Activated B cell treated with CpG ODN at 0.5 μM for 24 hours (primary cell): ENCODE measurements at regions of chr5 and their contacts with region 1.

Region 1: GRCh38 chr5:139273572-139274289 is 19.8 kb upstream of the MATR3 start:
- DNase-seq: peak; percentile 93
- ATAC-seq: peak; percentile 96
- H3K4me3 Mint-ChIP-seq: peak overlapping the region; percentile 90
- H3K27ac Mint-ChIP-seq: peak overlapping the region; percentile 91
- H3K4me1 Mint-ChIP-seq: peaks cover 52% of the 10 kb centered on the region
- H3K27me3 Mint-ChIP-seq: no peaks in the 10 kb centered on the region
- CTCF ChIP-seq: no peak

Region 2: DNA sequence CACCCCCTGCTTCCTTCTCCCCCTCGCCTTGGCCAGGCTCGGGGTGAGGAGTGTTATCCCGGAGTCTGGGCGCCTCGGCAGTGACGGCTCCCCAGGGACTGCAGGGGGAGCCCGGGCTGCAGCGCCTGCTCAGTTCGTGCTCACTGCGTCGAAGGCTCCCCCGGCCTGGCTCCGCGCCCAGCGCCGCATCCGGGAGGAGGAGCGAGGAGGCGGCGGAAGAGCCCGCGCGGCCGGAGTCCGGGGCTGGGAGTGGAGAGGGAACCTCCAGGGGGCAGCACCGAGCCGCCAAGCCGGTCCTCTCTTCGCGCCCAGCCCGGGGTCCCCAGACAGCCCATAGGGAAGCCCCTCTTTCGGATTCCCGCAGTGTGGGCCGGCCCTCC is 809.7 kb before region 1 on chr5:
- CTCF ChIA-PET with region 1: no interaction called
- POLR2A ChIA-PET with region 1: interaction called, 7 read pairs
- intact Hi-C with region 1: loop called (anchors 10 kb)
- DNase-seq: peak; percentile 92
- ATAC-seq: peak; percentile 56
- H3K4me3 Mint-ChIP-seq: peak overlapping the region; percentile 89
- H3K27ac Mint-ChIP-seq: peak overlapping the region; percentile 92
- H3K4me1 Mint-ChIP-seq: peaks cover 49% of the 10 kb centered on the region
- H3K27me3 Mint-ChIP-seq: no peaks in the 10 kb centered on the region
- CTCF ChIP-seq: peak; percentile 87

Region 3: DNA sequence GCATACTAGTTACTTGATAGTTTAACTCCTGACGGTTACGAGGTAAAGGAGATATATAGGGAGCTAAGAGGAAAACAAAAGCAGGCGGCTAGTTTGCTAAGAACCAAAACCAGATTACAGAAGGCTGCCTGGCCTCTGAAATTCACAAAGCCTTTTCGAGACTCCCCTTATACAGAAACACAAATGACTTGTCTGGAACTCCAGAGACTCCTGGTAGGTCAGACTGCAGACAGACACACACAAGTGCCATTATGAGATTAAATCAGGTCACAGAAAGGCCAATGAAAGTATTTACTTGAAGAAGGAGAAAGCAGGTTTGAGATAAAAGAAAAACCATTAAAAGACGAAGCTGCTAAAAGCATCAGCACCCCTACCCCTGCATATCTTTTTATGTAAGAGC is 256.1 kb before region 1 on chr5:
- CTCF ChIA-PET with region 1: no interaction called
- POLR2A ChIA-PET with region 1: interaction called, 13 read pairs
- intact Hi-C with region 1: no loop called
- DNase-seq: no peak
- ATAC-seq: no peak
- H3K4me3 Mint-ChIP-seq: no peak overlapping the region
- H3K27ac Mint-ChIP-seq: no peak overlapping the region
- H3K4me1 Mint-ChIP-seq: no peaks in the 10 kb centered on the region
- H3K27me3 Mint-ChIP-seq: no peaks in the 10 kb centered on the region
- CTCF ChIP-seq: no peak

Region 4: DNA sequence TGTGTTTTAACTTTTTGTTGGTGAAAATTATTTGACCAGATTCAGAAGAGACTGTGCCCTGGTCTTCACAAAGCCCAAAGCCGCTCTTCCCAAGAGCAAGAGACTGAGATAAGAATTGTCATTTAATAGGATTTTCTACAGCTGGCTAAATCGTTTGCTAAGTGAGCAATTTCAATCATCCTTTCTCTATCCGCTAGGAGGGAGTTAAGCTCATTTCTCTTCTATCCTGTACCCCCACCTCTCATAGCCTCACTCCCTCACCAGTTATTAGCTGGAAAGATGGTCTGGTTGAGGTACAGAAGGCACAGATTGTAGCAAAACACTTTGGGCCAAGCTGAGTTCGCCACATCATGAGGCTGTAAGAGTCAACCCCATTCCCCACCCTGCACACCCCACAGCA is 32.6 kb before region 1 on chr5:
- CTCF ChIA-PET with region 1: no interaction called
- POLR2A ChIA-PET with region 1: no interaction called
- intact Hi-C with region 1: no loop called
- DNase-seq: no peak
- ATAC-seq: no peak
- H3K4me3 Mint-ChIP-seq: no peak overlapping the region
- H3K27ac Mint-ChIP-seq: no peak overlapping the region
- H3K4me1 Mint-ChIP-seq: no peaks in the 10 kb centered on the region
- H3K27me3 Mint-ChIP-seq: peaks cover 11% of the 10 kb centered on the region
- CTCF ChIP-seq: no peak

Region 5: GRCh38 chr5:139251281-139251687 is 22.4 kb before region 1 on chr5:
- CTCF ChIA-PET with region 1: interaction called, 5 read pairs
- POLR2A ChIA-PET with region 1: no interaction called
- intact Hi-C with region 1: loop called (anchors 1 kb)
- DNase-seq: no peak
- ATAC-seq: peak; percentile 50
- H3K4me3 Mint-ChIP-seq: no peak overlapping the region
- H3K27ac Mint-ChIP-seq: no peak overlapping the region
- H3K4me1 Mint-ChIP-seq: peaks cover 5% of the 10 kb centered on the region
- H3K27me3 Mint-ChIP-seq: no peaks in the 10 kb centered on the region
- CTCF ChIP-seq: no peak

Region 6: DNA sequence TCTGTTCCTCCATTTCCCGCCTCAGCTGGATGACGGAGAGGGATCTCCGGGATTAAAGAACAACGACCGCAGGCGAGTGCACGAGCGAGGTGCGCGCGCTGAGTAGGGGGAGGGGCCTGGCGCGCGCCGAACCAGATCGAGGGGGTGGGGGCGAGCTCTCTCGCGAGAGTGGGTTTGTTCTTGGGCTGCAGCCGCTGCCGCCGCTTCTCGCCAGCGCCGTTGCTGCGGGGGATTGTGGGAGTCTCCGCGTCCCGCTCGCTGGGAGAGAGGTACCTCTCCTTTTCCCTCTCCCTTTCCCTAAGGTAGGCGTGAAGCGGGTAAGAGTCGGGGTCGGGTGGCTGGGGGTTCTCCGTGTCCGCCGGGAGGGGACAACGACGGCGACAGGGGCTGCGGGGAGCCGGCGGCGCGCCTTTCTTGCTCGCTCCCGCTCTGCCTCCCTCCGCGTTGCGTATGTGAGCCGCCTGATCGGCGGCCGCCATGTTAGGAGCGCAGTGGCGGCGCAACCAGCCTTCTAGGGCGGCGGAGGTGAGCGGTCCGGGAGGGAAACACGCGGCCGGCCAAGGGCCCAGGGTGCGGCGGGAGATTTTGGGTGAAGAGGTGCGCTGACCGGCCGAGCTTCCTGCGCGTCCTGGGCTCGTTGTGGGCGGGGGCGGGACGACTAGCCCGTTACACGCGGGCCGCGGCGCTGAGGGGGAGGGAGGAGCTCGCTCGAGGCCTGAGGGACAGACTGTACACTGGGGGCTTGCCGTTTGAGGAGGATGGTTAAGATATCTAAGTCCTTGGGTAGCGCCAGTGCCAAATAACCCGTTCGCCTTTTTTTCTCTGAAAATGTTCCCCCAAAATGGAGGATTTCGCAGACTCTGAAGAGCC is 20.0 kb after region 1 on chr5 and contains the start of gene MATR3:
- CTCF ChIA-PET with region 1: no interaction called
- POLR2A ChIA-PET with region 1: interaction called, 98 read pairs
- intact Hi-C with region 1: loop called (anchors 1 kb)
- DNase-seq: peak; percentile 87
- ATAC-seq: peak; percentile 90
- H3K4me3 Mint-ChIP-seq: peak within 1 kb of the TSS; percentile 97
- H3K27ac Mint-ChIP-seq: peak within 1 kb of the TSS; percentile 96
- H3K4me1 Mint-ChIP-seq: peaks cover 48% of the 10 kb centered on the region
- H3K27me3 Mint-ChIP-seq: no peaks in the 10 kb centered on the region
- CTCF ChIP-seq: no peak
- total RNA-seq, gene MATR3: 242 and 294 TPM in 2 replicates

Region 7: DNA sequence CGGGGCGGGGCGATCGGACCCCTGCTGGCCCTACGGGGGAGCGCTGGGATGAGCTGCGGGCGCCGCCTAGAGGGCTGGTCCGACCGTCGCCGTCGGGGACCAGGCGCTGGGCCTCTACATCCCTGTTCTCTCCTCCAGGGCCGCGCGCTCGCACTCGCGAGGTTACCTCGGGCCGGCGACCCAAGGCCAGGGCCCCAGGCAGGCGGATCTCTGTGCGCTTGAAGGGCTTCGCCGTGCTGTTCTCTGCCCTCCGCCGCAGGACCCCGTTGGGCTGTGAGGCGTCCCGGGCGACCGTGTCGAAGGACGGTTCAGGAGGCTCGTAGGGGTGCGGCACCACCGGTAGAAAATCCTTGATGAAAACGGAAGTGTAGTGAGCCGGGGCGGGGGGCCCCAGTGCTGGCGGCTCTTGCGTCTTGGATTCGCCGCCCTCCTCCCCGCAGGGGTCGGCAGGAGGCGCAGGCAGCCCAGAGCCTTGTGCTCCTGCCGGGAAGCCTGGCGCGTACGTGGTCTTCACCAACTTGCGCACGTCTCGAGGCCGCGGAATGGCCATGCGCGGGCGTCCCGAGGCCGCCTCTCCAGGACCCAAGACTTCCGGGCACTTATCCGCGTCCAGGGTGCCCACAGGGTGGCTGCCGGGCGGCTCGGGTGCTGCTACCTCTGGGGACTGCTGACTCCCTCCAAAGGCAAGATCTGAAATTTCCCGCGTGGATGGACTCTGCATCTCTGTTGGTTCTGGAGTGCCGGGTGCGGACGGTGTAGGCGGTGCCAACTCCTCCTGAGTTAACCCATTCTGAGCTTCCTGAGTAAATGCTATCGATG is 119.2 kb after region 1 on chr5:
- CTCF ChIA-PET with region 1: no interaction called
- POLR2A ChIA-PET with region 1: interaction called, 15 read pairs
- intact Hi-C with region 1: loop called (anchors 1 kb)
- DNase-seq: peak; percentile 89
- ATAC-seq: peak; percentile 62
- H3K4me3 Mint-ChIP-seq: peak overlapping the region; percentile 94
- H3K27ac Mint-ChIP-seq: peak overlapping the region; percentile 86
- H3K4me1 Mint-ChIP-seq: peaks cover 39% of the 10 kb centered on the region
- H3K27me3 Mint-ChIP-seq: no peaks in the 10 kb centered on the region
- CTCF ChIP-seq: no peak